Mammary epithelial cell (primary cell): ENCODE measurements at regions of chr2 and their contacts with region 1.

Region 1: GRCh38 chr2:58291726-58292438 is 50.8 kb upstream of the FANCL start:
- DNase-seq: no peak
- H3K4me3 ChIP-seq: no peak overlapping the region
- H3K27ac ChIP-seq: no peak overlapping the region
- H3K4me1 ChIP-seq: no peaks in the 10 kb centered on the region
- H3K27me3 ChIP-seq: peaks cover 2% of the 10 kb centered on the region
- CTCF ChIP-seq: no peak

Region 2: GRCh38 chr2:58313916-58314315 is 22.0 kb after region 1 on chr2:
- CTCF ChIA-PET with region 1: no interaction called
- dilution Hi-C with region 1: no loop called
- in situ Hi-C with region 1: no loop called
- intact Hi-C with region 1: loop called (anchors 1 kb)
- DNase-seq: no peak
- H3K4me3 ChIP-seq: no peak overlapping the region
- H3K27ac ChIP-seq: no peak overlapping the region
- H3K4me1 ChIP-seq: no peaks in the 10 kb centered on the region
- H3K27me3 ChIP-seq: no peaks in the 10 kb centered on the region
- CTCF ChIP-seq: no peak